ENCODE measurements at regions of chr10 and their contacts with region 1.

Region 1: GRCh38 chr10:6563075-6563474 is 17.0 kb downstream of the PRKCQ start:
- DNase-seq: peak in 1 of 2 donors; percentile 63
- ATAC-seq: peak; percentile 70 to 77 (median 71)
- H3K4me3 ChIP-seq: no peak overlapping the region
- H3K4me3 Mint-ChIP-seq: peak overlapping the region; percentile 65
- H3K27ac ChIP-seq: peak overlapping the region; percentile 75
- H3K27ac Mint-ChIP-seq: peak overlapping the region; percentile 84 to 95
- H3K4me1 ChIP-seq: peaks cover 44% of the 10 kb centered on the region
- H3K4me1 Mint-ChIP-seq: peaks cover 79 to 84% of the 10 kb centered on the region in 2 donors
- H3K27me3 ChIP-seq: no peaks in the 10 kb centered on the region
- H3K27me3 Mint-ChIP-seq: no peaks in the 10 kb centered on the region
- CTCF ChIP-seq: no peak

Region 2: GRCh38 chr10:6530211-6530840 is 32.7 kb before region 1 on chr10:
- intact Hi-C with region 1: loop called (anchors 2 kb)
- DNase-seq: peak; percentile 69 to 88
- ATAC-seq: peak; percentile 87 to 93 (median 90)
- H3K4me3 ChIP-seq: peak overlapping the region; percentile 11
- H3K4me3 Mint-ChIP-seq: peak overlapping the region; percentile 96
- H3K27ac ChIP-seq: peak overlapping the region; percentile 89
- H3K27ac Mint-ChIP-seq: peak overlapping the region; percentile 98
- H3K4me1 ChIP-seq: peaks cover 47% of the 10 kb centered on the region
- H3K4me1 Mint-ChIP-seq: peaks cover 75 to 88% of the 10 kb centered on the region in 2 donors
- H3K27me3 ChIP-seq: no peaks in the 10 kb centered on the region
- H3K27me3 Mint-ChIP-seq: no peaks in the 10 kb centered on the region
- CTCF ChIP-seq: no peak

Measured in natural killer cell (primary cell).